ENCODE measurements at regions of chr4 and their contacts with region 1.

Region 1: GRCh38 chr4:103091601-103092223 is 7.9 kb downstream of the BDH2 start:
- DNase-seq: peak; percentile 19 to 72 (median 24)
- ATAC-seq: peak; percentile 76
- H3K4me3 ChIP-seq: no peak overlapping the region
- H3K27ac ChIP-seq: no peak overlapping the region
- H3K4me1 ChIP-seq: no peaks in the 10 kb centered on the region
- H3K27me3 ChIP-seq: no peaks in the 10 kb centered on the region
- CTCF ChIP-seq: peak; percentile 62 to 89 (median 71)
- EP300 ChIP-seq: no peak
- POLR2A ChIP-seq: no peak
- RAD21 ChIP-seq: peak; percentile 70 to 74

Region 2: DNA sequence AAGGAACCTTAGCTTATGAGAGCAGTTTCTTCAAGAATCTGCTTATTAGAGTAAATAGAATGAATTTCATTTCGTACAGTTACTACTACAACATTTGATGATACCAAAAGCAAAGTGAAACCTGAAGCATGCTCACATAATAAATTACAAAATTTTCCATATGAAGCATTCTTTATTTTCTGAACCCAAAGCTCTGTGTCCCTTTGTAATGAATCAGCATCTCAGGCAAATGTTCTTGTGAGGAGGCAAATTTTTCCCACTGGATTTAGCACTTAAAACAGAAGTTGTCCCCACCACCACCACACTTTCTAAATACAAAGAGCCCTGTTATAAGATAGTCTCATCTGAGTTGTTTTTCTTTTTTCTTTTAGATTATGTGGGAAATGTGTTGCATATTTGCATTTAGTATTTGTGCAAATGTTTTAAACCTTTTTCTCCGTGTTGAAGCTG is 661.2 kb before region 1 on chr4:
- CTCF ChIA-PET with region 1: interaction called, 12 read pairs
- POLR2A ChIA-PET with region 1: no interaction called
- in situ Hi-C with region 1: loop called (anchors 5 kb)
- intact Hi-C with region 1: loop called (anchors 5 kb)
- DNase-seq: peak in 2 of 4 experiments; percentile 10 to 25
- ATAC-seq: peak; percentile 56
- H3K4me3 ChIP-seq: peak overlapping the region; percentile 49
- H3K27ac ChIP-seq: peak overlapping the region; percentile 71; the same call in 2 of the 3 replicates
- H3K4me1 ChIP-seq: no peaks in the 10 kb centered on the region; a peak in 1 of 5 replicates
- H3K27me3 ChIP-seq: no peaks in the 10 kb centered on the region
- CTCF ChIP-seq: no peak
- EP300 ChIP-seq: no peak
- POLR2A ChIP-seq: no peak
- RAD21 ChIP-seq: no peak

Region 3: GRCh38 chr4:102449751-102450352 is 641.9 kb before region 1 on chr4:
- CTCF ChIA-PET with region 1: no interaction called
- POLR2A ChIA-PET with region 1: no interaction called
- in situ Hi-C with region 1: no loop called
- intact Hi-C with region 1: loop called (anchors 5 kb)
- DNase-seq: peak; percentile 22 to 64 (median 32)
- ATAC-seq: peak; percentile 83
- H3K4me3 ChIP-seq: no peak overlapping the region
- H3K27ac ChIP-seq: no peak overlapping the region
- H3K4me1 ChIP-seq: peaks cover 0 to 2% of the 10 kb centered on the region in 2 experiments; a peak in 2 of 5 replicates
- H3K27me3 ChIP-seq: no peaks in the 10 kb centered on the region; a peak in 1 of 5 replicates
- CTCF ChIP-seq: peak; percentile 52 to 74 (median 52); a peak in 5 of 6 replicates
- EP300 ChIP-seq: no peak
- POLR2A ChIP-seq: no peak
- RAD21 ChIP-seq: peak; percentile 80 to 82

Region 4: DNA sequence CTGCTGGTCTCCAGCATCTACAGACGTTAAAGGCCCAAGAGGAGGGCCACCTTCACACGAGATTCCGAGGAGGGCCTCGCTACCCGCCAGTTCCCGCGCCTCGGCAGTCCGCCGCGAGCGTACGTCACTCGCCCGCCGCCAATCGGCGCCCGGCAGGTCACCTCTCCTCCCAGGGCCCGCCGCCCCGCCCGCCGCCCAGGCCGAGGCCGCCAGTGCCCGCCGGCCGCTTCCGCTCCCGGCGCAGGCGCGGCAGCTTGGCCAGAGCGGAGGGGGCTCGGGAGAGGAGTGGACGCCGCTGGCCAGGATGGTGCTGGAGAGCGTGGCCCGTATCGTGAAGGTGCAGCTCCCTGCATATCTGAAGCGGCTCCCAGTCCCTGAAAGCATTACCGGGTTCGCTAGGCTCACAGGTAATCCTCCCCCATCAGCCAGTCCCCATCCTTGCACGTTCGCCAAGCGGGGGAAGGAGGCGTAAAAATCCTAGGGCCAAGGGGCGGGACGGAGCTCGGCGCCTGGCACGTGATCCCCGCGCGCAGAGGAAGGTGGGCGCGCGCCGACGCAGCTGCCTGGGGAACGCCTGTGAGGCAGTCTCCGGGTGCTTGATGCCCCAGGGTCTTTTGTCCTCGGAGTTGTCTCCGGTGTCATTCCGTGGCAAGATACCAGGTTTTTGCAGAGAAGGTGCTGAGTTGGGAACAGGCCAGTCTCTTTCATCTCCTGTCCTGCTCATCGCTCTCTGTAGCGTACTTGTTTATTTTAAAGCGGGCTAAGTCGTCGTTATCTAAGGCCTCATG is 222.7 kb before region 1 on chr4 and contains the start of gene CISD2:
- CTCF ChIA-PET with region 1: no interaction called
- POLR2A ChIA-PET with region 1: no interaction called
- in situ Hi-C with region 1: no loop called
- intact Hi-C with region 1: loop called (anchors 5 kb)
- DNase-seq: peak; percentile 85 to 95 (median 88)
- ATAC-seq: peak; percentile 83
- H3K4me3 ChIP-seq: peak within 1 kb of the TSS; percentile 59
- H3K27ac ChIP-seq: peak within 1 kb of the TSS; percentile 98
- H3K4me1 ChIP-seq: peaks cover 8 to 10% of the 10 kb centered on the region in 2 experiments
- H3K27me3 ChIP-seq: no peaks in the 10 kb centered on the region
- CTCF ChIP-seq: no peak; a peak in 2 of 6 replicates
- EP300 ChIP-seq: peak; percentile 27; the same call in 1 of the 2 replicates
- POLR2A ChIP-seq: peak; percentile 90
- RAD21 ChIP-seq: no peak
- polyA plus RNA-seq, gene CISD2: 87.2 to 91.4 TPM

Region 5: DNA sequence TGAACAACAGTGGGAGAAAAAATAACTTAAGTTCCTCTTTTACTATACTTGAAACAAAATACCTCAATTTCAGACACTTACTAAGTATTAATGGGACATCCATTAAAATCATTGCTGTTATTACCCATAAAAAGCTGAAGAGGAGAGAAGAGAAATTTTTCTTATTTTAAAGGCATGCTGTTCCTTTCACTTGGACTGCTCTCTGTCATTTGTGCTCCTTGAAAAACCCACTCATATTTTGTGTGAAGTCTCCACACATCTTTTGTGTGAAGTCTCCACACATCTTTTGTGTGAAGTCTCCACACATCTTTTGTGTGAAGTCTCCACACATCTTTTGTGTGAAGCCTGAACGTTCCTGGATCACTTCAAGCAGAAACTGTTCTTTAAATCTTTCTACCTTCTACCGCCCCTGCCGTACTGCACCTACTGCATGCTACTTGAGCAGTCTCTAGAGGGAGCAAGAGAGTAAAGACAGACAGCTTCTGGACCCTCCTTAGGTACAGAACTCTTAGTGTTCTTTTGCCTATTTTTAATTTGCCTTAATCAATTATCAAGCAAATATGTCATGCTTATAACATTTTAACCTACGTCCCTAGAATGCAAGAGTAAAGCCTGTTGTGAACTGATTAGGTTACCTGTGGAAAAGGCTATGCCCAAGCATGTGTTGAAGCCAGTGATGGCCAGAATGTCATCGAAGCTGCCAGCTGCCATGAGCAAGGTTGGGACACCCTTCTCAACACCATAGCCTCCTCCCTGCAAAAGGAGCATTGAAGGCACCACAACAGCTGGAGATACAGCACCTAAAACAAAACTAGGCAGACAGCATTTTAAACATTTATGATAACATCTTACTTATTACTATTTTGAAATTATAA is 45.1 kb before region 1 on chr4:
- CTCF ChIA-PET with region 1: interaction called, 5 read pairs
- POLR2A ChIA-PET with region 1: no interaction called
- in situ Hi-C with region 1: no loop called
- intact Hi-C with region 1: loop called (anchors 1 kb)
- DNase-seq: peak; percentile 55 to 71 (median 60)
- ATAC-seq: peak; percentile 99
- H3K4me3 ChIP-seq: no peak overlapping the region
- H3K27ac ChIP-seq: no peak overlapping the region
- H3K4me1 ChIP-seq: no peaks in the 10 kb centered on the region; a peak in 1 of 5 replicates
- H3K27me3 ChIP-seq: no peaks in the 10 kb centered on the region
- CTCF ChIP-seq: peak; percentile 77 to 90 (median 82)
- EP300 ChIP-seq: no peak
- POLR2A ChIP-seq: no peak
- RAD21 ChIP-seq: peak; percentile 38 to 57; a peak in 3 of 4 replicates

Measured in K562 (cell line).